Posterior vena cava (tissue), 2 donors: ENCODE measurements at regions of chr3 and their contacts with region 1.

Region 1: DNA sequence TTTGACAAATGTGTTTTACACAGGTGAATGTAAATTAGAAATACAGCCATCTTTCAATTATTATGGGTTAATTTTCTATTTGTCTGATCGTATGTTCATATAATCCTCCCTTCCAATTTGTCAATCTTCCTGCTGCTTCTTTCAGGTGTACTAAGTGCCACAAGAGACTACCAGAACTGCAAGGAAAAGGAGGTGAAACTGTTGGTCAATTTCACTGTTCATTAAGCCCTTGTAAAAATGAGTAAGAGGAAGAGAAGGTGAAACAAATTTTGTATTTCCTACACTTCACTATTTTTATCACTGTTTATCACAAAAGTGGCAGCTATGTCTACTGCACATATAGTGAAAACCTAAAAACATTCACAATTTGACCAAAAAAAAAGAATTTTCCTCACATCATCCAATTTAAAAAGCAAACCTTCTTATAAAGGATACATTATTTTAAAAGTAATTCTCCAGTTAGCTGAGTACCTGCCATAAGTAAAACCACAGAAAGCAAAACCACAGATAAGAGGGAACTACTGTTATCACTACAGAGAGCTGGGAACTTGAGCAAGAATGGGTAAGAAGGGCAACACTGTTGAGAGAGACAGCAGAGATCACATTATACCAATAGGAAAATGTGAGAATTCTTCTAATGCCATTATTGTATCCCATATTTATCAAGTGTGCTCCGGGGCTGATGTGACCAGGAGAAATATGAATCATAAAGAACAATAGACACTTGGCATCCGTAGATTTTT is 163.0 kb downstream of the TBC1D5 start:
- DNase-seq: no peak

Region 2: DNA sequence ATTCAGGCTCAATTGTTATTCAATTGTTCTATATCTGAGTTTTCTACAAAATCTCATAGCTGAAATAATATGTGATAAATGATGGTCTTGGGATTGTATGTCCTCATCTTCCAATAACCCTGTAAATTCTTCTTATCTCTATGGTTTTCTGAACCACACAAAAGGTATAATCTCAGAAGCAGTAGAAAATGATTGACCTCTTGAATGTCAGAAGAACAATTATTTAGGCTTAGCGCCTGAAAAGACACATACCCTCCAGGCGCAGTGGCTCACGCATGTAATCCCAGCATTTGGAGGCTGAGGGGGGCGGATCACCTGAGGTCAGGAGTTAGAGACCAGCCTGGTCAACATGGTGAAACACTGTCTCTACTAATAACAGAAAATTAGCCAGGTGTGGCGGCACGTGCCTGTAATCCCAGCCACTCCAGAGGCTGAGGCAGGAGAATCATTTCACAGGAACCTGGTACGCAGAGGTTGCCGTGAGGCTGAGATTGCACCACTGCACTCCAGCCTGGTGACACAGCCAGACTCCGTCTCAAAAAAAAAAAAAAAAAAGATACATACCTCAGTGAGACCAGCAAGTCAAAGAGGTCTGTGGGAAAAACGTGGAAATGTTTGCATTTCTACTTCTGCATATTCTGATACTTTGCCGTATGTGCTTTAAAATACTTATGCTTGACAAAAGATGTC is 451.1 kb after region 1 on chr3:
- intact Hi-C with region 1: loop called in 1 of 2 experiments (anchors 5 kb)
- DNase-seq: no peak